ENCODE measurements at regions of chr3 and their contacts with region 1.

Region 1: DNA sequence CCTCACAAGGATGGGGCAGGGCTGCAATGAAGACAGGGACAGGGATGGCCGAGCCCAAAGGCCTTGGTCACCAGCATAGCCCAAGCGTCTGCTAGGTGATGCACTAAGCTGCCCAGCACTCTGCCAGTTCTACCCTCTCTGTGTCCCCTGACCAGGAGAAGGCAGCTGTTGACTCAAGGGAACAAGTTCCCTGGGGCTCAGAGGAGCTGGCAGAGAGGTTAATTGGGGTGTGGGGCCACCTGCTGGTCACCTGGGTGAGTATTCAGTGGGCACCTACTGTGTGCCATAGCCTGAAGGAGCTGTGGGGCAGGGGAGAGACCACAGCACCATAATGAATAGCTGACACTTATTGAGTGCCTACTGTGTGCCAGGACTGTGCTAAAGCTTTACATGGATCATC is 22.0 kb upstream of the DOCK3 start:
- DNase-seq: peak; percentile 5
- ATAC-seq: peak; percentile 89
- H3K4me3 ChIP-seq: no peak overlapping the region
- H3K27ac ChIP-seq: no peak overlapping the region
- H3K4me1 ChIP-seq: no peaks in the 10 kb centered on the region
- H3K27me3 ChIP-seq: no peaks in the 10 kb centered on the region; a peak in 2 of 4 replicates
- CTCF ChIP-seq: peak; percentile 57 to 61 (median 59)
- EP300 ChIP-seq: no peak
- POLR2A ChIP-seq: no peak
- RAD21 ChIP-seq: peak; percentile 71

Region 2: DNA sequence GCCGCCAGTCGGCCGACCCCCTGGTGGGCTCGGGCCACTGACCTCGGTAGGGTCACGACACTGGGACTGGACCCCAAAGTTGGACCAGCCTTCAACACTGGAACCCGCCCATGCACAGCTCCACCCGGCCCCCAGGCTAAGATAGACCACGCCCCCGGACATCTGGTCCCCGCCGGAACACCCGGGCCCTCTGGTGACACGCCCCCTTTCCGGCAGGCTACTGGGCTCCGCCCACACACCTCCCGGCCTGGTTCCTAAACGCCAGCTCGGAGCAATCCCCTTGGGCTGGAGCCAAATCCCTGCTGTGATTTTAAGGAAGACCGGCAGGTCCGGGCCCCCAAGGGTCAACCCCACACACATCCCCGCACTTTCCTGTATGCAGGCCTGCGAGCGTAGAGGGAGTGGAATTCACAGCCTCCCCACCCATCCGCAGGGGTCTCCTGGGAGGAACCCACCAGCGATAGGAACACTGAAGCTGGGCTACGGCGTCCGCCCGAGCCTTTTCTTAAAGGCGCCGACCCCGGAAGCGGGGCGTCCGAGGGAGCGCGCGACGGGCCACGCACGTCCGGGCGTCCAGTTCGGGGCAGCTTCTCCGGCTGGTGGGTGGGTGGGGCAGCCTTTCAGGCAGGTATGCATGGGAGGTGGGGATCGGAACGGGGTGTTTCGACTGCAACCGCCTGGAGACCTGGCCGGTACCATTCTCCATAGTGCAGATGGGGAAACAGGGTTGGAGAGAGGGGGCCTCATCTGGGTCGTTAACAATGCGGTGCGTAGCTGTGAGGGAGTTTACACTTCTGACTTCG is 83.6 kb before region 1 on chr3 and contains the start of gene HEMK1:
- CTCF ChIA-PET with region 1: interaction called, 13 read pairs
- POLR2A ChIA-PET with region 1: no interaction called
- RAD21 ChIA-PET with region 1: interaction called, 6 read pairs
- SMC1A ChIA-PET with region 1: interaction called, 5 read pairs
- in situ Hi-C with region 1: no loop called
- intact Hi-C with region 1: no loop called
- DNase-seq: peak; percentile 76
- ATAC-seq: peak; percentile 84
- H3K4me3 ChIP-seq: peak within 1 kb of the TSS; percentile 81
- H3K27ac ChIP-seq: peak within 1 kb of the TSS; percentile 91
- H3K4me1 ChIP-seq: peaks cover 13% of the 10 kb centered on the region
- H3K27me3 ChIP-seq: no peaks in the 10 kb centered on the region
- CTCF ChIP-seq: no peak
- EP300 ChIP-seq: 0 out of 4 replicates have a peak, but pooled peaks of 1 of the 2 experiments have one; percentile 15
- POLR2A ChIP-seq: peak; percentile 85
- RAD21 ChIP-seq: no peak
- polyA plus RNA-seq, gene HEMK1: 2.8 to 10.5 TPM

Region 3: GRCh38 chr3:50587806-50588758 is 64.6 kb before region 1 on chr3:
- CTCF ChIA-PET with region 1: interaction called, 3 read pairs
- POLR2A ChIA-PET with region 1: no interaction called
- RAD21 ChIA-PET with region 1: interaction called, 3 read pairs
- SMC1A ChIA-PET with region 1: interaction called, 10 read pairs
- in situ Hi-C with region 1: no loop called
- intact Hi-C with region 1: no loop called
- DNase-seq: peak; percentile 32
- ATAC-seq: peak; percentile 72
- H3K4me3 ChIP-seq: no peak overlapping the region
- H3K27ac ChIP-seq: peak overlapping the region; percentile 51
- H3K4me1 ChIP-seq: peaks cover 35% of the 10 kb centered on the region
- H3K27me3 ChIP-seq: no peaks in the 10 kb centered on the region
- CTCF ChIP-seq: no peak
- EP300 ChIP-seq: no peak
- POLR2A ChIP-seq: peak; percentile 5
- RAD21 ChIP-seq: no peak

Region 4: GRCh38 chr3:50617096-50617791 is 35.5 kb before region 1 on chr3 and contains the start of gene MAPKAPK3:
- CTCF ChIA-PET with region 1: interaction called, 250 read pairs
- POLR2A ChIA-PET with region 1: interaction called, 3 read pairs
- RAD21 ChIA-PET with region 1: interaction called, 84 read pairs
- SMC1A ChIA-PET with region 1: interaction called, 81 read pairs
- in situ Hi-C with region 1: no loop called
- intact Hi-C with region 1: loop called (anchors 1 kb)
- DNase-seq: no peak
- ATAC-seq: peak; percentile 30
- H3K4me3 ChIP-seq: peak within 1 kb of the TSS; percentile 87
- H3K27ac ChIP-seq: peak within 1 kb of the TSS; percentile 57
- H3K4me1 ChIP-seq: peaks cover 23% of the 10 kb centered on the region
- H3K27me3 ChIP-seq: no peaks in the 10 kb centered on the region
- CTCF ChIP-seq: no peak
- EP300 ChIP-seq: no peak
- POLR2A ChIP-seq: peak; percentile 71
- RAD21 ChIP-seq: no peak
- polyA plus RNA-seq, gene MAPKAPK3: 7.9 to 8.7 TPM

Region 5: GRCh38 chr3:50627407-50628051 is 25.2 kb before region 1 on chr3:
- CTCF ChIA-PET with region 1: interaction called, 250 read pairs
- POLR2A ChIA-PET with region 1: interaction called, 3 read pairs
- RAD21 ChIA-PET with region 1: interaction called, 12 read pairs
- SMC1A ChIA-PET with region 1: interaction called, 8 read pairs
- in situ Hi-C with region 1: no loop called
- intact Hi-C with region 1: no loop called
- DNase-seq: no peak
- ATAC-seq: peak; percentile 55
- H3K4me3 ChIP-seq: no peak overlapping the region
- H3K27ac ChIP-seq: no peak overlapping the region
- H3K4me1 ChIP-seq: peaks cover 22% of the 10 kb centered on the region
- H3K27me3 ChIP-seq: no peaks in the 10 kb centered on the region
- CTCF ChIP-seq: peak; percentile 27 to 42 (median 37); a peak in 3 of 6 replicates
- EP300 ChIP-seq: no peak
- POLR2A ChIP-seq: no peak
- RAD21 ChIP-seq: peak; percentile 61

Region 6: GRCh38 chr3:50674349-50675178 is 21.9 kb after region 1 on chr3 and contains the start of gene DOCK3:
- CTCF ChIA-PET with region 1: interaction called, 5 read pairs
- POLR2A ChIA-PET with region 1: interaction called, 13 read pairs
- RAD21 ChIA-PET with region 1: no interaction called
- SMC1A ChIA-PET with region 1: no interaction called
- in situ Hi-C with region 1: no loop called
- intact Hi-C with region 1: no loop called
- DNase-seq: no peak
- ATAC-seq: peak; percentile 85
- H3K4me3 ChIP-seq: no peak within 1 kb of the TSS
- H3K27ac ChIP-seq: no peak within 1 kb of the TSS
- H3K4me1 ChIP-seq: no peaks in the 10 kb centered on the region
- H3K27me3 ChIP-seq: peaks cover 9 to 30% of the 10 kb centered on the region in 2 experiments
- CTCF ChIP-seq: no peak
- EP300 ChIP-seq: no peak
- POLR2A ChIP-seq: no peak
- RAD21 ChIP-seq: no peak
- polyA plus RNA-seq, gene DOCK3: 0.02 to 0.04 TPM

Measured in GM12878 (cell line).